ENCODE measurements at regions of chr21 and their contacts with region 1.

Region 1: DNA sequence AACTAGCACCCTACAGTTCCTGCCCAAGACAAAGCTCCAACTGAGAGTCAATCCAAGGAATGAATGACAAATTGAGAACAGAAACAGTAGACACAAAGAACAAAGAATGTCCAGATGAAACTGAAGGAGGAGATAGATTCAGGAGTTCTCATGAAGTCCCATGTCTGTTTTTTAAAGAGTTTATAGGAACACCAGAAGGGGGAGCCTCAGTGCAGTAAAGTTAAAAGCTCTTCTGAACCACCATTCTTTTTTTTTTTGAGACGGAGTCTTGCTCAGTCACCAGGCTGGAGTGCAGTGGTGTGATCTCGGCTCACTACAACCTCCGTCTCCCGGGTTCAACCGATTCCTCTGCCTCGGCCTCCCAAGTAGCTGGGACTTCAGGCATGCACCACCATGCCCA is 323.6 kb downstream of the MRPL39 start:
- DNase-seq: peak; percentile 25
- CTCF ChIP-seq: peak; percentile 32

Region 2: GRCh38 chr21:25139414-25139813 is 144.3 kb before region 1 on chr21:
- CTCF ChIA-PET with region 1: no interaction called
- POLR2A ChIA-PET with region 1: no interaction called
- DNase-seq: no peak
- CTCF ChIP-seq: no peak

Region 3: DNA sequence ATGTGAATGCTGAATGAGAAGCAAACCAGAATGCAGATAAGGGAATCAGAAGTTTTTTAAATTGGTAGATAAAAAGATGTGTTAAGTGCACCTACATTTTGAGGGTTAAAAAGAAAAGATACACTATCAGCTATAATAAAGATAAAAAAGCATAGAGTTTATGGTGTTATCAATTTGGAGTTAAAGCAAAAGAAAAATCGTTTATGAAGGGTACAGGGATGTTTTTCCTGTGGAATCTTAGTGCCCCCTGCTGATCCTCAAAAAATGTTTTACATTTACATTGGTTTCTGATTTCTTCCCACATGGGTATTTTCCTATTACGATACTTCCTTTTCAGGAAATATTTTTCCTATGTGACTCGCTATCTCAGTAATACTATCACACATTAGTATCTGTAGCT is 30.1 kb after region 1 on chr21:
- CTCF ChIA-PET with region 1: interaction called, 13 read pairs
- POLR2A ChIA-PET with region 1: no interaction called
- DNase-seq: no peak
- CTCF ChIP-seq: peak; percentile 39

Region 4: DNA sequence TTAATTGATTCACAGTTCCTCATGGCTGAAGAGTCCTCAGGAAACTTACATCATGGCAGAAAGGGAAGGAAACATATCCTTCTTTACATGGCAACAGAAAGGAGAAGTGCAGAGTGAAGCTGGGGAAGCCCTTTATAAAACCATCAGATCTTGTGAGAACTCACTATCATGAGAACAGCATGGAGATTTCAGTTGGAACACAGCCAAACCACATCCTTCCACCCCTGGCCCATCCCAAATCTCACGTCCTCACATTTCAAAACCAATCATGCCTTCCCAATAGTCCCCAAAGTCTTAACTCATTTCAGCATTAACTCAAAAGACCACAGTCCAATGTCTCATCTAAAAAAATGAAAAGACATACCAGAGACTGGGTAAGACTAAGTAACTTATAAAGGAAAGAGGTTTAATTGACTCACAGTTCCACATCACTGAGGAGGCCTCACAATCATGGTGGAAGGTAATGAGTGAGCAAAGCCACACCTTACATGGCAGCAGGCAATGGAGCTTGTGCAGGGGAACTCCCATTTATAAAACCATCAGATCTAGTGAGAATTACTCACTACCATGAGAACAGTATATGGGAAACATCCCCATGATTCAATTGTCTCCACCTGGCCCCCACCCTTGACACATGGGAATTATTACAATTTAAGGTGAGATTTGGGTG is 218.4 kb after region 1 on chr21:
- CTCF ChIA-PET with region 1: no interaction called
- POLR2A ChIA-PET with region 1: no interaction called
- DNase-seq: no peak
- CTCF ChIP-seq: no peak